HEK293T (cell line): ENCODE measurements at regions of chr11 and their contacts with region 1.

Region 1: DNA sequence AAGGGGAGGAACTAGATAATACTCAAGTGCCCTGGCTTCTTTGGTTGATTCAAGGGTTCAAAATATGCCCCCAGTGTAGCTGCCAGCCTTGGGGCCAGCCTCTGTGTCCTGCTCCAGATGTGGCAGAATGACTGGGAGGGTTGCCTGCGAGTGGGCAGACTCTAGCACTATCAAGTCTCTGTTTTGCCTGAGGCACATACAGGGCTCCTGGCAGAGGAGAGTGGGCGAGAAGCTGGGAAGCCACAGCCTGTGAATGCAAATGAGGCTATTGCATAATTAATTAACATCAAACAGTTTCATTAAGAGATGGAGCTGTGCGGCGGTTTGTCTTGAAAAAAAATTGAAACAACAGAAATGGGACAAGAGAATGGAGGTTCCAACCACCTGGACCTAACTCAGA is 50.8 kb downstream of the BUD13 start:
- DNase-seq: no peak

Region 2: GRCh38 chr11:116691771-116692177 is 30.2 kb before region 1 on chr11:
- CTCF ChIA-PET with region 1: no interaction called
- POLR2A ChIA-PET with region 1: no interaction called
- DNase-seq: peak; percentile 81

Region 3: DNA sequence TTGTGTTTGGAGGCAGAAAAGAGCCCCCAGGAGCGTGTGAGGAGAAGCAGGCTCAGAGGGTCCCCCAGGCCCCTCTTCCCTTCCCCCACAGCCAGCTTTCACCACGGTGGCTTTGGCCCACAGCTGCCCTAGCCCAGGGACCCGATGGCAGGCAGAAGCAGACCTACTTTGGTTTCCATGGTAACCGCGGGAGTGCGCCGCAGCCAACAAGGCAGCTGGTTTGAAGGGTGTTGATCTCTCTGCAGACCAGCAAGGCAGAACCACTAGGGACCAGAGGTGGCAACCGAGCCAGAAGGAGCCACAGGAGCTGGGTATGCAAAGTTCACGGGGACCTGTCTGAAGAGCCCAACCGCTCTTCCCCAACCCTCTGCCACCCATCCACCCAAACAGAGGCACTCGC is 18.6 kb before region 1 on chr11:
- CTCF ChIA-PET with region 1: no interaction called
- POLR2A ChIA-PET with region 1: no interaction called
- DNase-seq: no peak

Region 4: DNA sequence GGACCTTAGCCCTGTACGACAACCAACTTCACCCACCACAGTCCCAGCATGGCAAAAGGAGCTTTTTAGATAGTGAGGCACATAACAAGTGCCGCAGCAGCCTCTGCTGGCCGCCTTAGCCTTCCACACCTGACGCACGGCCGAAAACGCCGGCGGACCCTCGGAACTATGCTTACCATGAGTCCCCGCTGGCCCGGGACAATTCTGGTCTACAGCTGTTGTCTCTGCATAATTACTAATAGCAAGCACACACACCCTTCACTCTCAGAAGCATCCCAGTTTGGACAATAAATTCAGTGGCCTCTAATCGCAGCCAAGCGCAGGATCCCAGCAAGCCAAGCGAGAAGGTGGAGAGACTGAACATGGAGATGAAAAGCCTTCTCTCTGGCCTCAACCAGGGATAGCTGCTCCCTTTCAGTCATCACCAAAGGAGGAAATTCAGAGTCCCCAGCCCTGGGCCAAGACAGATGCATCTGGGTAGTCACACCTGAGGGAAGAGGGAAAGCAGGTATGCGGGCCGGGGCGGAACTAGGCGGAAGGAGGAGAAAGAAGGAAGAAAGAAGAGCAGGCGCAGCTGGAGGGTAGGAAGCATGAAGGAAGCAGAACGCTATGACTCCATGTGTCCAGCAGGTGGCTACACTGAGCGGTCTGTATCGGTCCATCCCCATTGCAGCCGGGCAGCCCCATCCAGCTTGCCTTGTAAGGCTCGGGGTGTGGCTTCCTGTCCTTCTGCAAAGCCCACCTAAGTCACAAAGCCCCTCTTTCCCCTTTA is 10.5 kb after region 1 on chr11:
- CTCF ChIA-PET with region 1: interaction called, 10 read pairs
- POLR2A ChIA-PET with region 1: no interaction called
- DNase-seq: peak; percentile 87